ENCODE measurements at regions of chr7 and their contacts with region 1.

Region 1: DNA sequence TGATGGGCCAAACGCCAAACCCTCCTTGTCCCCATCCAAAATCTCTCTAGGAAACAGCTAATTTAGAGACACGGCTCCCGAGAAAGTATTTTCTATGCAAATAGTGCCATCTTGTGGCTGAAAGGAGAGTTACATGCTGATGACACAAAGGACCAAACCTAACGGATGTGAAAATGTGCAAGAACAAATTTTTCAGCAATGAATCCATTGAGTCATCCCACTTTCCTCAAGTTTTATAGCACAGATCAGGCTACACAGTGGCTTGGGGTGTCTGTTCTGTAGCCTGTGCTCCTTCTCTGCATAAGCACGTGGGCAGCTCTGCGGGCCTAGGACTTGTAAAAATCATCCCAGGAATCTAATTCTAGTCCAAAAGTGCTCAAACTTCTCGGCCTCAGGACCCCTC is 154.8 kb upstream of the PRR15 start:
- DNase-seq: no peak
- ATAC-seq: peak; percentile 55 to 86 (median 62)
- H3K4me3 ChIP-seq: no peak overlapping the region
- H3K27ac ChIP-seq: no peak overlapping the region
- H3K4me1 ChIP-seq: no peaks in the 10 kb centered on the region
- H3K27me3 ChIP-seq: no peaks in the 10 kb centered on the region
- CTCF ChIP-seq: peak; percentile 89

Region 2: GRCh38 chr7:28921822-28922221 is 487.0 kb before region 1 on chr7:
- intact Hi-C with region 1: loop called (anchors 1 to 2 kb)
- DNase-seq: no peak
- ATAC-seq: peak; percentile 93 to 98 (median 95)
- H3K4me3 ChIP-seq: no peak overlapping the region
- H3K27ac ChIP-seq: no peak overlapping the region
- H3K4me1 ChIP-seq: peaks cover 12% of the 10 kb centered on the region
- H3K27me3 ChIP-seq: no peaks in the 10 kb centered on the region
- CTCF ChIP-seq: peak; percentile 88

Region 3: GRCh38 chr7:29035044-29035740 is 373.6 kb before region 1 on chr7:
- intact Hi-C with region 1: no loop called
- DNase-seq: peak in 1 of 2 donors; percentile 25
- ATAC-seq: peak in 3 of 4 donors; percentile 40 to 86 (median 46)
- H3K4me3 ChIP-seq: no peak overlapping the region
- H3K27ac ChIP-seq: no peak overlapping the region
- H3K4me1 ChIP-seq: no peaks in the 10 kb centered on the region
- H3K27me3 ChIP-seq: no peaks in the 10 kb centered on the region
- CTCF ChIP-seq: no peak

Region 4: GRCh38 chr7:29105752-29106668 is 302.8 kb before region 1 on chr7:
- intact Hi-C with region 1: loop called (anchors 2 to 10 kb)
- DNase-seq: peak in 1 of 2 donors; percentile 21
- ATAC-seq: peak; percentile 80 to 88 (median 84)
- H3K4me3 ChIP-seq: no peak overlapping the region
- H3K27ac ChIP-seq: no peak overlapping the region
- H3K4me1 ChIP-seq: peaks cover 2% of the 10 kb centered on the region
- H3K27me3 ChIP-seq: no peaks in the 10 kb centered on the region
- CTCF ChIP-seq: peak; percentile 89

Region 5: DNA sequence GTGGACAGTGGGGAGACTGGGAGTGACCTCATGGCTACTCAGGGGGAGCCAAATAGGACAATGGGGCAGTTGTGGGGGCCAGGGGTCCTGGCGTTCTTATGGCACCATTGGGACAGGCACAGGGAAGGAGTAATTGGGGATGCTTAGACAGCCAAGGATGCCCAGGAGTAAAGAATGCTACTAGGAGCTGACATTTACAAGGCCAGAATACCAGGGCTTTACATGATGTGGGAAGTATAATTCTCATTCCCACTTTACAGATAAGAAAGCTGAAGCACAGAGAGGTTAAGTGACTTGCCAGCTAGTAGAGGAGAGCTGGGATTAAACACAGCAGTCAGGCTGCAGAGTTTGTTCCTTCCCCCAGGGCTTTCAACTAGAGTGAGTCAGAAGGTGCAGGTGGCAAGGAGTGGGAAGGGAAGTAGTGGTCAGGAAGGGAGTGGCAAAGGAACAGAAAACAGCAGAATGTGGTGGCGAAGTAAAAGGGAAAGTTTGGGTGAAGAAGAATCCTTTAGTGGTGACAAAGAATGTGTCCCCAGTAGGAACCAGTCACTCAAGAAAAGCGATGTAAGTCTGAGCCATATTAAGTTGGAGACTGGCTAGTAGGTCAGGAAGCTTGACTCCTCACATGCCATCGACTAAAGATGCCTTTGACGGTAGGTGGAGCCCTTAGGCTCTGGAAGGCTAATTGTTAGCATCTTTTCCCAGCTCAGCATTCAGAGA is 295.3 kb before region 1 on chr7:
- intact Hi-C with region 1: loop called in 1 of 2 experiments (anchors 10 kb)
- DNase-seq: no peak
- ATAC-seq: peak in 3 of 4 donors; percentile 32 to 50 (median 49)
- H3K4me3 ChIP-seq: no peak overlapping the region
- H3K27ac ChIP-seq: no peak overlapping the region
- H3K4me1 ChIP-seq: no peaks in the 10 kb centered on the region
- H3K27me3 ChIP-seq: no peaks in the 10 kb centered on the region
- CTCF ChIP-seq: peak; percentile 35

Region 6: GRCh38 chr7:29189743-29190201 is 219.1 kb before region 1 on chr7:
- intact Hi-C with region 1: loop called (anchors 2 to 5 kb)
- DNase-seq: peak; percentile 55 to 67
- ATAC-seq: peak; percentile 53 to 67 (median 60)
- H3K4me3 ChIP-seq: no peak overlapping the region
- H3K27ac ChIP-seq: no peak overlapping the region
- H3K4me1 ChIP-seq: peaks cover 4% of the 10 kb centered on the region
- H3K27me3 ChIP-seq: peaks cover 0 to 2% (median 0%) of the 10 kb centered on the region in 3 donors
- CTCF ChIP-seq: peak; percentile 65

Region 7: DNA sequence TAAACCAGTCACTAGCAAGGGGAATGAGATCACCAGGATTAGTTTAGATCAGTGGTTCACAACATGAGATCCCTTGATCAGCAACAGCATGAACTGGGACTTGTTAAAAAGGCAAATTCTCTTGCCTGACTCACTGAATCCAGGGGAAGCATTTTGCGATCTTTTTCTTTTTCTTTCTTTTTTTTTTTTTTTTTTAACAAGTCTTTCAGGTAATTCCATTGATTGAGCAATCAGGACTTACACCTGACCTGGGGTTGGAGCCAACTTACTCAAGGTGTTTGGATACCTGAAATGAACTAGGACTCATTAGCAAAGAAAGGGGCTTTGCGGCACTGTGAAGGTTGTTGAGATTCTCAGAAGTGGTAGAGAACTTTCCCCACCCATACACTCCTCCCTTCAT is 107.6 kb after region 1 on chr7:
- intact Hi-C with region 1: no loop called
- DNase-seq: no peak
- ATAC-seq: no peak
- H3K4me3 ChIP-seq: no peak overlapping the region
- H3K27ac ChIP-seq: no peak overlapping the region
- H3K4me1 ChIP-seq: no peaks in the 10 kb centered on the region
- H3K27me3 ChIP-seq: no peaks in the 10 kb centered on the region
- CTCF ChIP-seq: no peak

Region 8: GRCh38 chr7:29647020-29647654 is 238.3 kb after region 1 on chr7:
- intact Hi-C with region 1: no loop called
- DNase-seq: no peak
- ATAC-seq: no peak
- H3K4me3 ChIP-seq: no peak overlapping the region
- H3K27ac ChIP-seq: no peak overlapping the region
- H3K4me1 ChIP-seq: peaks cover 4% of the 10 kb centered on the region
- H3K27me3 ChIP-seq: no peaks in the 10 kb centered on the region
- CTCF ChIP-seq: no peak

Region 9: GRCh38 chr7:30105208-30105607 is 696.4 kb after region 1 on chr7:
- intact Hi-C with region 1: no loop called
- DNase-seq: no peak
- ATAC-seq: no peak
- H3K4me3 ChIP-seq: no peak overlapping the region
- H3K27ac ChIP-seq: no peak overlapping the region
- H3K4me1 ChIP-seq: no peaks in the 10 kb centered on the region
- H3K27me3 ChIP-seq: no peaks in the 10 kb centered on the region
- CTCF ChIP-seq: no peak

Measured in psoas muscle (tissue), 8 donors.